GM18951 (cell line): ENCODE measurements at regions of chr12 and their contacts with region 1.

Region 1: DNA sequence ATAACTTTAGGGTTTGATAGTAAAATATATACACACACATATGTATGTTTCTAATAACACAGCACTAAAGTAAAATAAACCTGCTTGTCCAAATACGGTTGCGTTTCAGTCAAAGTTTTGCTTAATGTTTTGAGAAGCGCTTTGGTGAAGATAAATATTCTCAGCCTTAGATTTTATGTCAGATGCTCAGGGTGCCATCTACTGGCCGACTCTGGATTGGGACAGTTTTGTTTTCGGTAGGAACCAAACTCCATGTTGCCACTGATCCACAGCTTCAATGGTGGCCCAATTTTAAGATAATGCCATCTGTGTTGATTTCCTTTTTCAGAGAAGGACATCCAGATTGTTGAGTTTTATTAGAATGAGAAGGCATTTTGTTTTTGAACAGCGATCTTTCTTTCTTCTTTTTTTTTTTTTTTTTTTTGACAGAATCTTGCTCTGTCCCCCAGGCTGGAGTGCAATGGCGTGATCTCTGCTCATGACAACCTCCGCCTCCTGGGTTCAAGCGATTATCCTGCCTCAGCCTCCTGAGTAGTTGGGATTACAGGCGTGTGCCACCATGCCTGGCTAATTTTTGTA is 43.1 kb downstream of the LLPH start:
- POLR2A ChIP-seq: no peak

Region 2: DNA sequence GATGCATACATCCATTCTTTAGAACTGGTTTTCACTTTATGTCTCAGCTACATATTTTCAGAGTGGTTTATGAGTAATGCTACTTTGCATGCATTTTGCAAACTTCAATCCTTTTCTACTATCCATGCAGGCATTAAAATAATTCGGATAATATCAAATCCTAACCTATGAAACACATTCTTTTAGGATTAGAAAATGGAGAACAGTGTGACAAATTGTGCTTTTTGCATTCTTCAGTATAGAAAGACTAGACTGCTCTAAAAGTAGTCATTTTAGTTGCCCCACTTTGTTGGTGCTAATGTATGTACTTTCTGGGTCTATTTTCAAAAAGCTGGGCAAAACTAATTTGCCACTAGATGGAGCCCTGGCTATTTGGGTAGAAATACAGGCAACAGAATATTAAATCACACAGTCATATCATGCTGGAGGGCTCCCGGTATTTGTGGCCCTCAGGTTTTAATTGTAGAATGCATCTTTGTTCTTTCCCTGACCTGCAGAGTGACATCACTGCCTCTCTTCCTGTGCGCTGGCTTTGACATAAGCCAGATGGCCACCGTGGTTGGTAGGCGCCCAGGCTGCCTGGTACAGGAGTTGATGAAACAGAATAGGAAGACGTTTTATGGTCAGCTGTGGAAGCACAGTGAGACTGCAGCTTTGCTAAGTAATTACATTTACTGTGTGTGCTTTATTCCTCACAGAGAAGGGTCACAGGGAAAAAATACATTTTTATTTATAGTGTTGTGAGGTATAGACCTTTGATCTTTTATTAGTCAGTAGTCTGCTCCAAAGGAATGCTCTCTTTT is 780.9 kb before region 1 on chr12:
- in situ Hi-C with region 1: loop called (anchors 25 kb)
- POLR2A ChIP-seq: no peak

Region 3: DNA sequence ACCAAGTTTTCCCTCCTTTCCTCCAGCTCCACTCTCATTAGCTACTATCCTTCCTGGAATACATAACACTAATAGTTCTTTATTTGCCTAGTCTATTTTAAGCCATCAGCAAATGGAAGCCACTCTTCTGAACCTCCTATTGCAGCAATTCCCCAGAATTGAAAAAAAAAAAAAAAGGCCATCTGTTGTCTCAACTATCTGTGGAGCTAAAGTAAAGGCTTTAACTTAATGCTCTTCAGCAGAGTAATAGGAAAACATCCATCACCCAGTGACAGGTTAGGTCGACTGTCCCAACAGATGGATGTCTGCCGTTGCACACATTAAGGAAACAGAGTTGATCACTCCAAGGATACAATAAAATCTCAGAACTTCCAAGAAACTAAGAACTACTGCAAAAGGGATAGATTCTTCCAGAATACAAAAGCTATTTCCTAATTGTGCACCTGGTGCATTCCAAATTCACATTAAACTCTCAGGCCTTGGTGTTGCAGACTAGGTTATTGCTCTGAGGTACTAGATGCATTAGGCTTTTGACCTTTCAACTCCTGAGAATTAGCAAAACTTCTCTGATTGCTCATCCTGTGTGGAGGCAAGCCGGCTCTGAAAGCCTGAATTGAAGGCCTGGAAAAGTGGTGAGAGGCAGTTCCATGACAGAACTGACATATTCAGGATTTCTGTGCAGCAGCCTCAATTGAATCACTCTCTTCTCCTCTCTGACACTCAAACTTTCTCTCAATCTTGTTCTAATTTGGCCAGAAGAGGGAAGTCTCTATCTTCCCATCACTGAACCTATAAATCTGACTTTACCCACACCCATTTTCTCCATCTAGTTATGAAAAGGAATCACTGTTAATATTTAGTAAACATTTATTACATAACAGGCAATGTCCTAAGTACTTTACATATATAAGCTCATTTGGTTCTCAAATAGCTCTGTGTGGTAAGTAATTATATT is 501.5 kb before region 1 on chr12:
- in situ Hi-C with region 1: loop called (anchors 25 kb)
- POLR2A ChIP-seq: no peak

Region 4: GRCh38 chr12:66130277-66131066 is 43.0 kb after region 1 on chr12 and contains the start of gene LLPH:
- in situ Hi-C with region 1: no loop called
- POLR2A ChIP-seq: peak; percentile 90

Region 5: DNA sequence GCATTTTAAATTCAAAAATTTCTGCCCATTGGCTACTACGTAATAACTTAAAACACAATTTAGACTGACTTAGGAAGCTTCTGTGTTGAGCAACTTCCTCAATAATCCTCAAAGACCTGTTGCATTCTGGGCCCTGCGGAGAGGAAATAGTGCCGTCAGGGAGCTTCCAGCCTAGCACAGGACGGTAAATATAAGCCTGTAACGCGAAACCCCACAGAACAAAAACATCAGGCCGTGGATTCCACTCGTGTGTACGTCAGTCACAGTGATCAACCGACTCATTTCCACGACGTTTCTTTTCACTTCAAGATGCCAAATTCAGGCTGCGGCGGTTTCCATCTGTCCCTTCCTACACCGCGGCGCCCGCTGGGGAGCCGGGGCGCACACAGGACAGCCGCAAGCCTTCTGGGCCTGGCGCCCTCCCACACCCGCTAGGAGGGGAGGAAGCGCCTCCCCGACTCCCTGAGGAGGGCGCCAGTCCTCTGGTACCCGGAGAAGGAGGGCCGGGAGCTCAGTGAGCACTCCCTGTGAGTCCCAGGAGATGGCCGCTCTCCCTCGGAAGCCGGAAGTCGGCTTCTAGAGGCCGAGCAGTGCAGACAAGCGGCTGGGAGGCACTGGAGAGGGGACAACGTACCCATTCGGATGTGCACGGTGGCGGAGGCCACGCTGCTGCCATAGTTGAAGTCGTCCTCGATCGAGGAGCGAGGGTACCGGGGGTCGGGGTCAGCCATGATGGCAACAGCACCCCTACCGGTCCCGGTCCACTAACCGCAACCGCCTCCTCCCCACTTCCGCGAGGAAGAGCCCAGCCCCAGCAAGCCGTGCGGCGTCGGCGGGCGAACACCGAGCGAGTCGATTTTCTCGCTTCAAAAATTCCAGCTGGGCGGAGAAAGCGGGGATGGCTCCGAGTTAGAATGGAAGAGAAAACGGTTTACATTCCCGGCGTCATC is 82.0 kb after region 1 on chr12 and contains the start of gene TMBIM4:
- in situ Hi-C with region 1: no loop called
- POLR2A ChIP-seq: peak; percentile 81